AG04450 (cell line): ENCODE measurements at regions of chr3 and their contacts with region 1.

Region 1: DNA sequence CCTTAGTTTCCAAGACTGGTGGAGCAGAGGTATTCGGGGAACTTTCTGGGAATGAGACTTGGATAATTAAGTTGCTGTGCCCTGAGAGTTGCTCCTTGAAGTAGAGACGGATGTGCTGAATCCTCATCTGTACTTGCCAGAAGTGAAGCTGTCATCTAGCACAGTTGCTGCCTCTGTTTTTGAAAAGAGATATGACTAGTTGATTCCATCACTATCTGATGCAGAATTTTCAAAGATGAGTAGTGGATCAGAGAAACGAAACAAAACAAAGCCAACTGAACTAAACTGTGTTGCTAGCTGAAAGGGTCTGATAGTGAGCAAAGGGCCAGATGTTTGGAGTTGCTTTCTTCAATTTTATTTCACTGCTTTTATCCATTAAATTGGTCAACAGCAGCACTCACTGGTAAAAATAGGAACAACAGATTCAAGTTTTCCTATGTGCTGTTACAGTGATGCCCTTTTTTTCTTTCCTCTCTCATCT is 52.7 kb downstream of the MITF start:
- DNase-seq: no peak
- H3K4me3 ChIP-seq: no peak overlapping the region
- H3K27ac ChIP-seq: no peak overlapping the region
- H3K27me3 ChIP-seq: no peaks in the 10 kb centered on the region
- CTCF ChIP-seq: peak; percentile 65

Region 2: GRCh38 chr3:69639851-69640250 is 152.1 kb before region 1 on chr3:
- CTCF ChIA-PET with region 1: no interaction called
- POLR2A ChIA-PET with region 1: no interaction called
- DNase-seq: no peak
- H3K4me3 ChIP-seq: no peak overlapping the region
- H3K27ac ChIP-seq: no peak overlapping the region
- H3K27me3 ChIP-seq: no peaks in the 10 kb centered on the region
- CTCF ChIP-seq: no peak

Region 3: DNA sequence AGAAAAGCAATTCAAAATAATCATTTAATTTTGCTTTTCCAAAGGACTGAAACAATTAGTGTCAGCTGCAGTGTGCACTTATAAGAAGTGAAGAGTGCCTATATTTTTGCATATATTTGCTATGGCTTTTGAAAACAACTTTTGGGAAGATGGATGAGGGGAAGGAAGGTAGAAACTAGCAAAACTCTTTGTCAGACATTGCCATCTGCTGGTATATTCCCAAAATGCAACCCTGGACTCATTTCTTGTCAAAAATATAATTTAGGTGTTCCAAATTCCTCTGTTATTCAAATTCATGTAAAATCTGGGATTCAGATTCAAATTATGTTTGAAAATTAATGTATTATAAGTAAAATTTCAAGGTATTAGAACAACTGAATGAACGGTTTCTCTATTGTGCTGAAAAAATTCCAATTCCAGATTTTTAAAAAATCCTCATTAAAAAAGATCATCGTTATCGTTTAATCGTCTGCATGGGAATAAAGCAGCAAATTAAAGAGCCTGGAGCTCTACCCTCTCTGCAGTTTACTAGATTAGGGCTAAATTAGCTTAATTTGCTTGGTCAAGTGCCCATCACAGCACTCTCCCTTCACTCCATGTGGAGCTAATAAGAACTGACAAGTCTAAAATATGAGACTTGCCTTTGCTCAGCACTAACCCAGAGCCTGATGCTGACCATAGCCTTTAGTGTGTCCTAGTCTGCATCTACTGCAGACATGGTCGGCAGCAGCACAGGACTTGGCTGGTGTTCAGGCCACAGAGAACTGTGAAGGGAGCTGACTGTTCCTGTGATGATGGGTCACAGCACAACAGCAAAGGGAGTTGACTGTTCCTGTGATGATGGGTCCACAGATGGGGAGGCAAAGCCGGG is 120.6 kb before region 1 on chr3:
- CTCF ChIA-PET with region 1: interaction called, 13 read pairs
- POLR2A ChIA-PET with region 1: no interaction called
- DNase-seq: no peak
- H3K4me3 ChIP-seq: no peak overlapping the region
- H3K27ac ChIP-seq: no peak overlapping the region
- H3K27me3 ChIP-seq: peaks cover 10% of the 10 kb centered on the region
- CTCF ChIP-seq: peak; percentile 76

Region 4: GRCh38 chr3:69739204-69740102 is 52.5 kb before region 1 on chr3 and contains the start of gene MITF:
- CTCF ChIA-PET with region 1: interaction called, 15 read pairs
- POLR2A ChIA-PET with region 1: interaction called, 8 read pairs
- DNase-seq: peak; percentile 68
- H3K4me3 ChIP-seq: peak within 1 kb of the TSS; percentile 89
- H3K27ac ChIP-seq: no peak within 1 kb of the TSS
- H3K27me3 ChIP-seq: peaks cover 2% of the 10 kb centered on the region
- CTCF ChIP-seq: no peak
- polyA plus RNA-seq, gene MITF: 32.2 and 32.5 TPM in 2 replicates

Region 5: DNA sequence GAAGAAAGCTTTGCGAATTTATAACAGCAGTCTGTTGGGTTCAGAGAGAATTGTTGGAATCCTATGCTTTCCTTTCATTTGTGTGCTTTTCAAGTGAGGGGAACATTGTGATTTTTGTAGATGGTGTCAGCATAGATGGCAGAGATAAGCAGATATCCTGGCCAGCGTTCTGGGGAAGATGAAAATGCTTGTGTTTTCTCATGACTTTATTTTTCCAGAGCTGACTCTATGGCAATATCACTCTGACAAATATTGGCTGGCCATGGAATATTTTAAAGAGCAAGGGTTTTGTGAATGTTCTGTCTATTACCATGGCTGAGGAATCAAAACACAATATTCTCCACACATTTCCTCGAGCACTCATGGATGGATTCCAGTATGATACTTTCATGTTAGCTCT is 56.2 kb after region 1 on chr3:
- CTCF ChIA-PET with region 1: interaction called, 10 read pairs
- POLR2A ChIA-PET with region 1: no interaction called
- DNase-seq: no peak
- H3K4me3 ChIP-seq: no peak overlapping the region
- H3K27ac ChIP-seq: no peak overlapping the region
- H3K27me3 ChIP-seq: no peaks in the 10 kb centered on the region
- CTCF ChIP-seq: no peak

Region 6: DNA sequence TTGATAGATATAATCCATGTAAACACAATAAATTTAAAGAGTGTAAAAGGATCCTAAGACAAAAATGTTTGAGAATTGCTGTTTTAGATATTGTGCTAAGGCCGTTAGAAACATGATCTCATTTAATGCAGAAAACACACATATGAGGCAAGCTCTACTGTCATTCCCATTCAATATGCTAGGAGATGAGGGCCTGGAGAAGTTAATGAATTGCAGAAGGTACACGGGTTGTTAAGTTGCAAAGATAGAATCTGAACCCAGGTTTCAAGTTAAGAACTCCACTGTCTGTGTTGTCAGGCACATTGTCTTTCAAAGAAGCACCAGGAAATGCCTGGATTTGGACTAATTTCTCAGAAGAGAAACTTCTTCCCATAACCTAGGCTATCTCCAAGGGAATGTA is 142.4 kb after region 1 on chr3:
- CTCF ChIA-PET with region 1: interaction called, 10 read pairs
- POLR2A ChIA-PET with region 1: no interaction called
- DNase-seq: no peak
- H3K4me3 ChIP-seq: no peak overlapping the region
- H3K27ac ChIP-seq: no peak overlapping the region
- H3K27me3 ChIP-seq: no peaks in the 10 kb centered on the region
- CTCF ChIP-seq: no peak